ENCODE measurements at regions of chr2 and their contacts with region 1.

Region 1: DNA sequence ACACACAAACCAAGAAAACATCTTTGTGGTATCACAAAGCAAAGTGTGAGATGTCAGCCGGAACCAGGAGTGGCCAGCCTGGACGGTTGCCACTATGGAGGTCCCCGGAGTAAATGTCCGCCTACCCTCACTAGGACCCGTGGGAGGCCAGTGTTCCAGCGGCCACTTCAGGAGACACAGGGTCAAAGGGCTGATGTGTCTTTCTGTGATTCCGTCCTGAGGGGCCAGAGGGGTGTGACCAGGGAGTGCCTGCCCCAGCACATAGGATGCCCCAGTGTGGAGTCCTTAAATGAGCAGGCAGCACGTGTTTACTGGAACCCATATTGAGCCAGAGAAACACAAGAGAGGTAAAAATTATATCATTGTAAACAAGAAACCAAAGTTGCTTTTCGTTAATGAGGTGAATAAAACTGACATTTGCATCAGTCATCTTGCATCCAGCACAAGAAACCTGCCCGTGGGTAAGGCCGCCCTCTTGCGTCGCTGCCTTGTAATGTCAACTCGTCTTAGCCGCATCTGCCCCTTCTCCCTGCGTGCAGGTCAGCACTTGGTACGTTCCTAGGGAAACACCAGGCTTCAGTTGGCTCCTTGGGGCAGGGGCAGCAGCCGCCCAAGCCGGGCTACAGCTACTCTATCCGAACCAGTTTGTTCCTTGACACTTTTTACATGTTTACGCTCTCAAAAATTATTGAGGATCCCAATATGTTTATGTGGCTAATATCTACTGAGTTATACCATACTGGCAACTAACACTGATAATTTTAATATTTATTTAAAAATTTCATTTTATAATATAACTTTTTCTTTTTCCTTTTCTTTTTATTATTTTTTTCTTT is 46.7 kb upstream of the LAPTM4A start:
- DNase-seq: peak; percentile 90
- ATAC-seq: peak; percentile 77

Region 2: GRCh38 chr2:18387441-18388206 is 1710.5 kb before region 1 on chr2:
- intact Hi-C with region 1: loop called (anchors 10 kb)
- DNase-seq: peak; percentile 74
- ATAC-seq: peak; percentile 91

Region 3: GRCh38 chr2:19955544-19956422 is 142.3 kb before region 1 on chr2:
- intact Hi-C with region 1: loop called (anchors 1 kb)
- DNase-seq: no peak
- ATAC-seq: peak; percentile 79

Region 4: DNA sequence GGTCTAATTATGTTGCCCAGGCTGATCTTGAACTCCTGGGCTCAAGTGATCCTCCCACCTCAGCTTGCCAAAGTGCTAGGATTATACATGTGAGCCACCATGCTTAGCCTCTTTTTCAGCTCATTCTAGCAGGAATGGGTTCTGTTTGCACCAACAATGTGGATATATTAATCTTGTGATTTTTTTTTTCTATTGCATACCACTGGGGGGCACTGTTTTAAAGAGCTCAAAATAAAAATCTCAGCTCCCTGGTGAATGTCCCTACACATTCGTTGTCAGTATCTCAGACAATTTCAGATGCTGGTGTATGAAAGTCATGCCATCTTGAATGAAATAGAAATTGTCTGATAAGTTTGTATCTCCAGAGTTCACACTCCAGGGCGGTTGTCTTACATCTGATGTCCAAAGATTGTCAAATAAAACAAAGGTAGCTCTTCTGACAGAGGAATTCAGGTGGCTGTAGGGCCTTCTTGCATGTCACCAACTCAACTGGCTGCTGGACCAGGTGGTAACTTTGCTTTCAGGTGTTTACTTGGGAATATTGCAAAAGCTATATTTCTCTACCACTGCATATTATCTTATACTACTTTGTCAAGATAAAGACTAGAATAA is 82.5 kb before region 1 on chr2:
- intact Hi-C with region 1: loop called (anchors 1 kb)
- DNase-seq: no peak
- ATAC-seq: peak; percentile 47

Measured in Right ventricle myocardium inferior (tissue), 1 donor.